Left ventricle myocardium inferior (tissue), 1 donor: ENCODE measurements at regions of chr14 and their contacts with region 1.

Region 1: DNA sequence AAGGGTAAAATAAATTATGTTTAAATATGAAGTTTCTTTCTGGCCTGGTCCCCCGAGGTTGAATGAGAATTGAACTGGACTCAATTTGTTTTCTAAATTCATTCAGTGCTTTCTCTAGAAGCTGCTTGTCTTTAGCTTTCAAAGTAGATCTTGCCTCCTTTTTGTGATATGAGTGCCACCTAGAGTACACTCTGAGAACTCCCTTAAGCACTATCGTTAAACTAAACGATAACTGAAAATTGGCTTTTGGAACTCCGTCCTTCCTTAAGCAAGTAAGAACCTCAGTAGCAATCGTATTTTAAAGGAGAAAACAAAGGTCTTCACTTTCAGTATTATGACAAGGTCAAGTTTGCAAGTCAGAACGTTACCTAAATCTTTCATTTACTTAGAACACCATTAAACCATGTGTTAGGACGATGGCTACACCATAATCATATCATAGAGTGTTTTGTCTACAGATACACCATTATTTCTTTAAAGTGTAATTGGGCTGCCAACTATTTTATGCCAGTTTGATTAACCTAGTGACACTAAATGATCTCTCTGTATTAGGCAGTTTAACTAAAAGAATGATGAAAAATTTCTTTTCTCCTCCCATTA is 364.8 kb downstream of the SNAPC1 start:
- DNase-seq: no peak
- H3K4me3 ChIP-seq: no peak overlapping the region
- H3K27ac ChIP-seq: no peak overlapping the region
- H3K4me1 ChIP-seq: no peaks in the 10 kb centered on the region
- H3K27me3 ChIP-seq: peaks cover 83% of the 10 kb centered on the region
- CTCF ChIP-seq: peak; percentile 80

Region 2: GRCh38 chr14:61456720-61457119 is 670.3 kb before region 1 on chr14:
- intact Hi-C with region 1: loop called (anchors 5 kb)
- DNase-seq: peak; percentile 74
- H3K4me3 ChIP-seq: no peak overlapping the region
- H3K27ac ChIP-seq: no peak overlapping the region
- H3K4me1 ChIP-seq: peaks cover 42% of the 10 kb centered on the region
- H3K27me3 ChIP-seq: no peaks in the 10 kb centered on the region
- CTCF ChIP-seq: peak; percentile 91

Region 3: DNA sequence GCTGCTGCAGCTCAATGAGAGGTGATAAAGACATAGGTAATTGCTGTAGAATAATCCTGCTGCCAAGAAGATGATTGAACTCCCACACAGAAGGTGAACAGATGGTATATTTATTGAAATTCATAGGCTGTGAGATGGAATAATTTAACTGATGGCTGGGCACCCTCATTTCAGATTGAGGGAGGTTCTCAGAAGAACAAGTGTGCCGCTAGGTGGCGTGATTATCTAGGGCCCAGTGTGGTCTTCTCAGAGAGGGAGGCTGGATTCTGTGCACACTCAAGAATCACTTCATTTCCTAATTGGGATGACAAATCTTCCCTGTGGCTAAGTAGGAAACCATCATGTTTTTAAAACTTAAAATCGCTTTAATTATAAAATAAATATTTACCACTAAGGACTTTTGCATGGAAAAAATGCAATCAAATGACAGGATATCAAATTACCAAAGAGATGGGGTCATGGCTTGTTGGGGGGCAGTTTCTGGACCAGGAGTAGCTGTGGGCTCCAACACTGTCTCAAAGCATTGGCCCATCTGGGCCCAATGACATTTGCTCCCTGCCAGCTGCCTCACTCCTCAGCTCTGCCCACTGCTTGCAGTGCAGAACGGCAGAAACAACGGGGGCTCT is 232.4 kb before region 1 on chr14:
- intact Hi-C with region 1: loop called (anchors 10 kb)
- DNase-seq: peak; percentile 44
- H3K4me3 ChIP-seq: no peak overlapping the region
- H3K27ac ChIP-seq: no peak overlapping the region
- H3K4me1 ChIP-seq: no peaks in the 10 kb centered on the region
- H3K27me3 ChIP-seq: peaks cover 44% of the 10 kb centered on the region
- CTCF ChIP-seq: peak; percentile 73

Region 4: GRCh38 chr14:62253911-62254310 is 126.9 kb after region 1 on chr14:
- intact Hi-C with region 1: no loop called
- DNase-seq: no peak
- H3K4me3 ChIP-seq: no peak overlapping the region
- H3K27ac ChIP-seq: no peak overlapping the region
- H3K4me1 ChIP-seq: no peaks in the 10 kb centered on the region
- H3K27me3 ChIP-seq: peaks cover 4% of the 10 kb centered on the region
- CTCF ChIP-seq: no peak

Region 5: DNA sequence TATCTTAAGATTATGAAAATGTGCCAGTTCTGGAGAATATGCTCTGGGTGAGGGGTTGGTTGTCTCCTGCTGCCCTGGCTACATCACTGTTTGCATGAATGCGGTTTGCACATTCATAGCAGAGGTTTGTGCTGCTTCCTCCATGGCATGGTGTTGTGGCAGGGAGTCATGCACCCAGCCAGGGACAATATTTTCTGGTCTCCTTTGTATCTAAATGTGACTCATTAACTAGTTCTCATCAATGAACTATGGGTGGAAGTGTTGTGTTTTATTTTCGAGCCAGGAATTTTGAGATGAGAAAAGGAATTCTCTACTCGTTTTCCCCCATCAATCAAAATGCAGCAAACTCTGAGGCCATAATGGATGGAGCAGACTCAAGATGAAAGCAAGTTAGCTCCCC is 162.5 kb after region 1 on chr14:
- intact Hi-C with region 1: no loop called
- DNase-seq: no peak
- H3K4me3 ChIP-seq: no peak overlapping the region
- H3K27ac ChIP-seq: no peak overlapping the region
- H3K4me1 ChIP-seq: no peaks in the 10 kb centered on the region
- H3K27me3 ChIP-seq: no peaks in the 10 kb centered on the region
- CTCF ChIP-seq: no peak